Spleen (tissue), 13 donors: ENCODE measurements at regions of chr14 and their contacts with region 1.

Region 1: DNA sequence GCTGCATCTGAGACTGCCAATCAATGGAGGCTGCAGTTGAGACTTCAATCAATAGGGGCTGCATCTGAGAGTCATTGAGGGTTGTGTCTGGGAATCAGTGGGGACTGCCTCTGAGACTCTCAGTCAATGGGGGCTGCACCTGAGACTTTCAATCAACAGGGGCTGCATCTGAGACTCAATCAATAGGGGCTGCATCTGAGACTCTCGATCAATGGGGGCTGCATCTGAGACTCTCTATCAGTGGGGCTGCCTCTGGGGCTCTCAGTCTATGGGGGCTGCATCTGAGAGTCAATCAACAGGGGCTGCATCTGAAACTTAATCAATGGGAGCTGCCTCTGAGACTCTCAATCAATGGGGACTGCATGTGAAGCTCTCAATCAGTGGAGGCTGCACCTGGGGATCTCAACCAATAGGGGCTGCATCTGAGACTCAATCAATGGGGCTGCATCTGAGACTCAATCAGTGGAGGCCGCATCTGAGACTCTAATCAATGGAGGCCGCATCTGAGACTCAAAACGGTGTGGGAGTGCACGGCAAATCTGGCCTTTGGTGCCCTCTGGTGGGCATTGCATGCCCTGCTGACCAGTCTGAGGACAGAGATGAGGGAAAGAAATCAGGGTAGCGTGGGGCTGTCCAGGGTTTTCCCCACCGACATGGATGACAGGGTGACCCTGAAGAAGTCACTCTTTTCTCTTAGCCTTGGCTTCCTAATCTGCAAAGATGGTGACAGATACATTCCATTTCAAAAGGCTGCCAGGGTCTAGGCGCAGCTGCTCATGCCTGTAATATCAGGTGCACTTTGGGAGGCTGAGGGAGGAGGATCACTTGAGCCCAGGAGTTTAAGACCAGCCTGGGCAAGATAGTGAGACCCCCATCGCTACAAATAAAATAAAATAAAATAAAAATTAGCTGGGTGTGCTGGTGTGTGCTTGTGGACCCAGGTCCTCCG is 41.3 kb upstream of the EIF5 start:
- DNase-seq: peak; percentile 90
- H3K4me3 ChIP-seq: no peak overlapping the region
- H3K27ac ChIP-seq: no peak overlapping the region
- H3K4me1 ChIP-seq: peaks cover 0 to 6% (median 0%) of the 10 kb centered on the region in 6 donors
- H3K27me3 ChIP-seq: peaks cover 0 to 24% (median 0%) of the 10 kb centered on the region in 7 donors
- CTCF ChIP-seq: peak; percentile 75 to 95 (median 91)
- POLR2A ChIP-seq: no peak

Region 2: GRCh38 chr14:103078093-103078749 is 214.5 kb before region 1 on chr14:
- intact Hi-C with region 1: loop called (anchors 10 kb)
- DNase-seq: peak; percentile 92
- H3K4me3 ChIP-seq: no peak overlapping the region
- H3K27ac ChIP-seq: no peak overlapping the region
- H3K4me1 ChIP-seq: peaks cover 7 to 40% (median 31%) of the 10 kb centered on the region in 6 donors
- H3K27me3 ChIP-seq: peaks cover 0 to 34% (median 0%) of the 10 kb centered on the region in 7 donors
- CTCF ChIP-seq: peak; percentile 51 to 91 (median 79)
- POLR2A ChIP-seq: no peak

Region 3: GRCh38 chr14:103104654-103105452 is 187.8 kb before region 1 on chr14:
- intact Hi-C with region 1: loop called (anchors 10 kb)
- DNase-seq: peak; percentile 94
- H3K4me3 ChIP-seq: peak overlapping the region in 2 of 8 donors; percentile 17 to 58
- H3K27ac ChIP-seq: peak overlapping the region in 1 of 8 donors; percentile 40
- H3K4me1 ChIP-seq: peaks cover 12 to 69% (median 55%) of the 10 kb centered on the region in 6 donors
- H3K27me3 ChIP-seq: peaks cover 6 to 69% (median 33%) of the 10 kb centered on the region in 7 donors
- CTCF ChIP-seq: peak; percentile 93 to 98 (median 96)
- POLR2A ChIP-seq: no peak

Region 4: DNA sequence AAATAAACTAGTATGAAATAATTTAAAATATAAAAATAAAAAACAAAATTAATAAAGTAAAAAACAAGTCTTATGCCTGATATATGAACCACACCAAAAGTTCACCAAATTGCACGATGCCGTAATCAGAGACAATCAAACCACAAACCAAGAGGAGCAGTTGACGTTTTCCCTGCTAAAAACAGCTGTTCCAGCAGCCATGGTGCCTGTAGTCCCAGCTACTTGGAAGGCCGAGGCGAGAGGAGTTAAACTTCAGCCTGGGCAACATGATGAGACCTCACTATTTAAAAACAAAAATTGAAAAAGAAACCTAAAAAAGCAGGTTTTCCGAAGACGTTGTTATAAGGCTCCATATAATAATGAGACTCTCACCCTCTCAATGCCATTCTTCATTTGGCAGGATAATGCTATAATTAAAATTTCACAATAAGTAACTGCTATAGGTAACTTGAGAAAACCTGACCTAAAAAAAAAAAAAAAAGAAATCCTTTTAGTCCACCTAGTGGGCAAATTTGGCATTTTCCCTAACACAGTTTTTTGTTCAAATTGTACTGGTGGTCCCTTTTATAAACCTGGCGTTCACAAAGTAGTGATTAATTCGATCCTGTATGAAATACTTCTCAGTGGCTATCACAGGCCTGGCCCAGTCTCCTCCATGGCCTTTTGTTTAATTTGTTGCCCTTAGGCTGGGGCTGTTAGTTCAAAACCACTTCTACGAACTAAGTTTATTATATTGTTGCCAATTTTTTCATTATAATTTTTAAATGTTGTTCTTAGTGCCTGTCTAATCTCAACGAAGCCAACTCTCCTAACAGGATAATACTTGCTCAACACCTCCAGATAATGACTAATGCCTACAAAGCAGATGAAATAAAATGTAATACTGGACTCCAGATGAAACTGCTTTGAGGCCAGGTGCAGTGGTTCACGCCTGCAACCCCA is 107.4 kb before region 1 on chr14:
- intact Hi-C with region 1: loop called (anchors 10 kb)
- DNase-seq: no peak
- H3K4me3 ChIP-seq: no peak overlapping the region
- H3K27ac ChIP-seq: no peak overlapping the region
- H3K4me1 ChIP-seq: peaks cover 0 to 15% (median 11%) of the 10 kb centered on the region in 6 donors
- H3K27me3 ChIP-seq: peaks cover 0 to 49% (median 18%) of the 10 kb centered on the region in 7 donors
- CTCF ChIP-seq: peak; percentile 47 to 79 (median 69)
- POLR2A ChIP-seq: no peak